H1 (cell line): ENCODE measurements at regions of chr1 and their contacts with region 1.

Region 1: GRCh38 chr1:90417126-90417525 is 300.0 kb downstream of the BARHL2 start:
- DNase-seq: no peak
- H3K4me3 ChIP-seq: no peak overlapping the region
- H3K27ac ChIP-seq: no peak overlapping the region
- H3K4me1 ChIP-seq: no peaks in the 10 kb centered on the region
- H3K27me3 ChIP-seq: no peaks in the 10 kb centered on the region
- CTCF ChIP-seq: no peak
- EP300 ChIP-seq: no peak
- POLR2A ChIP-seq: no peak
- RAD21 ChIP-seq: no peak

Region 2: GRCh38 chr1:90357995-90358394 is 59.1 kb before region 1 on chr1:
- CTCF ChIA-PET with region 1: no interaction called
- POLR2A ChIA-PET with region 1: no interaction called
- DNase-seq: no peak
- H3K4me3 ChIP-seq: no peak overlapping the region
- H3K27ac ChIP-seq: no peak overlapping the region
- H3K4me1 ChIP-seq: peaks cover 0 to 2% (median 0%) of the 10 kb centered on the region in 4 experiments; a peak in 1 of 7 replicates
- H3K27me3 ChIP-seq: no peaks in the 10 kb centered on the region
- CTCF ChIP-seq: no peak
- EP300 ChIP-seq: no peak
- POLR2A ChIP-seq: no peak
- RAD21 ChIP-seq: no peak

Region 3: GRCh38 chr1:90434460-90434859 is 17.3 kb after region 1 on chr1:
- CTCF ChIA-PET with region 1: interaction called, 16 read pairs
- POLR2A ChIA-PET with region 1: no interaction called
- DNase-seq: no peak
- H3K4me3 ChIP-seq: no peak overlapping the region
- H3K27ac ChIP-seq: no peak overlapping the region
- H3K4me1 ChIP-seq: no peaks in the 10 kb centered on the region
- H3K27me3 ChIP-seq: no peaks in the 10 kb centered on the region
- CTCF ChIP-seq: peak in 2 of 3 experiments; percentile 20 to 53; a peak in 1 of 4 replicates
- EP300 ChIP-seq: no peak
- POLR2A ChIP-seq: no peak
- RAD21 ChIP-seq: peak in 1 of 2 experiments; percentile 49; a peak in 3 of 4 replicates